Calu3 (cell line): ENCODE measurements at regions of chr3 and their contacts with region 1.

Region 1: DNA sequence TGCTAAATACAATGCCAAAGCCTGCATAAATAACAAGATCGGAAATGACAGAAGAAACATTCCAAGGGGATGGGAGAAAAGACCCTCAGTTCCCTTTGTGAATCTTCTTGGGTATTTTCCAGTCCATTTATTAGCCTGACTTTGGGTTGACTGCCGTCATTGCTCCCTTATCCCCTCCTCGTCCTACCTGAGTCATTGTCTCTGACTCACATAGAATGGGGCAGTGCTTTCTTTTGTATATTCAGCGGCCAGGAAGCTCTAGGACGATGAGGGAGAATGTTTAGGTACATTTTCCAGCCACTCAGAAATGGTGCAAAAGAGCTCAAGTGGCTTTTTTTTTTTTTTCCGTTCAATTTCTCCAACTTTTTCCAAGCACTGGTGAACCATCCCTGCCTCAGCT is 71.6 kb downstream of the KAT2B start:
- DNase-seq: no peak
- H3K4me3 Mint-ChIP-seq: no peak overlapping the region
- H3K27ac Mint-ChIP-seq: no peak overlapping the region
- H3K4me1 Mint-ChIP-seq: peaks cover 9% of the 10 kb centered on the region
- H3K27me3 Mint-ChIP-seq: no peaks in the 10 kb centered on the region
- CTCF ChIP-seq: no peak

Region 2: GRCh38 chr3:20140881-20141280 is 29.0 kb after region 1 on chr3:
- CTCF ChIA-PET with region 1: no interaction called
- intact Hi-C with region 1: loop called (anchors 1 kb)
- DNase-seq: no peak
- H3K4me3 Mint-ChIP-seq: no peak overlapping the region
- H3K27ac Mint-ChIP-seq: no peak overlapping the region
- H3K4me1 Mint-ChIP-seq: no peaks in the 10 kb centered on the region
- H3K27me3 Mint-ChIP-seq: no peaks in the 10 kb centered on the region
- CTCF ChIP-seq: no peak